GM18951 (cell line): ENCODE measurements at regions of chr5 and their contacts with region 1.

Region 1: GRCh38 chr5:34915139-34915855 is at the starts of genes BRIX1 and RAD1:
- POLR2A ChIP-seq: peak; percentile 80

Region 2: GRCh38 chr5:34486160-34486848 is 429.0 kb before region 1 on chr5:
- in situ Hi-C with region 1: loop called (anchors 25 kb)
- POLR2A ChIP-seq: no peak

Region 3: GRCh38 chr5:35383041-35383440 is 467.7 kb after region 1 on chr5:
- in situ Hi-C with region 1: no loop called
- POLR2A ChIP-seq: no peak

Region 4: GRCh38 chr5:35458824-35459207 is 543.5 kb after region 1 on chr5:
- in situ Hi-C with region 1: no loop called
- POLR2A ChIP-seq: no peak